Activated CD4-positive, alpha-beta memory T cell treated with anti-CD3 and anti-CD28 coated beads for 36 hours (primary cell): ENCODE measurements at regions of chr6 and their contacts with region 1.

Region 1: DNA sequence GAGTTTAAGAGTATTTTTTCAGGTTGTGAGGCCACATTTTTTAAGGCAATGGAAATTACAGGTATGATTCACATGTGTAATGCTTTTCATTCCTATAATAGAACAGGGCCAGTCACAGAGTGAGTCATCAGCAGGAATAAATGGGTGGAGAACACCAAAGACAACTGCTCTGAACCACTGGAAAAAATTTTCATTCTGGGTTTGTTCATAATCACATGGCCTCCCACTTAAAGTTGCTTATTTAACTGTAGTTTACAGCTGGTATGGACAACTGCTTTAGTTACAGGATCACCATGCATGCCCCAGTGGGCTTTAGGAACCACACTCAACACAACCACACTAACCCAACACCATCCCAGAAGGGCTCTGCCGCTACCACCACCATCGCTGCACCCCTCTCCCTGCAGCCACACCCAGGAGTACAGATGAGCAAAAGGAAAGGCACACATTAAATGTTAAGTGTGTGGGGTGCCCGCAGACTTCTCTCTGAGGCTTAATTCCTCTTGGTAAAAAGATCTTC is 107.0 kb upstream of the DST start:
- DNase-seq: no peak
- H3K4me3 Mint-ChIP-seq: no peak overlapping the region
- H3K27ac Mint-ChIP-seq: no peak overlapping the region
- H3K4me1 Mint-ChIP-seq: peaks cover 9% of the 10 kb centered on the region
- H3K27me3 Mint-ChIP-seq: no peaks in the 10 kb centered on the region

Region 2: DNA sequence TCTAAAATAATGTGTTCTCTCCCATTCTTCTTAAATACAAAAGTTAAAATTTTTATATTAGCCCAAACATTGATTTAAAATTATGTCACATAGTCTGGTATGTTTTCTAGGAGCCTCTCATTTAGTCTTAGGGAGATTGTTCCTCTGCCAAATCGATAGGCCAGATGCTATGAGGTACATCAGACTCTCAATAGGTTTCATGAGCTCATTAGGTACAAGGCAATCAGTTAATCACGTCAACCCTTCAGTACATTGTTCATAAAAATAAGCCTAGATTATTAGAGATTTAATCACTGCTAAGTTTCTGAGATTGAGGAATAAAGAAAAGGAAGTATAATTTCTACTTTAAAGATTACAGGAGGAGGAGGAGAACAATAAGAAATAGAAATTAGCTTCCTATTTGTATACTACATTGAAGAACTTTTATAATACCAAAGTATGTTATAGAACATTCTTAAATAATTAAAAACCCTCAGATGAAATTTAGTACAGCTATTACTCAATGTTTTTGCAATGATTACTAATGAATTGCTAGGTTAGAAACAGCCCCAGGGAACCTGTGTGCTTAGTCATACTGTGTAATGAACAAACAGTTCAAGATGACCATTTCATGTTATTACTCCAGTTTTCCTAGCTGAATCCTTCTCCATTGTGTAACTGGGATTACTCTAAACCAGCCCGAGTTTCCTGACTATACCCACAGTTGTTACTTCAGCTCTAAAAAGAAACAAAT is 991.4 kb before region 1 on chr6:
- CTCF ChIA-PET with region 1: no interaction called
- POLR2A ChIA-PET with region 1: no interaction called
- intact Hi-C with region 1: no loop called
- DNase-seq: no peak
- H3K4me3 Mint-ChIP-seq: no peak overlapping the region
- H3K27ac Mint-ChIP-seq: no peak overlapping the region
- H3K4me1 Mint-ChIP-seq: no peaks in the 10 kb centered on the region
- H3K27me3 Mint-ChIP-seq: no peaks in the 10 kb centered on the region

Region 3: GRCh38 chr6:56843573-56844349 is 94.1 kb after region 1 on chr6:
- CTCF ChIA-PET with region 1: no interaction called
- POLR2A ChIA-PET with region 1: no interaction called
- intact Hi-C with region 1: loop called (anchors 5 kb)
- DNase-seq: peak; percentile 76
- H3K4me3 Mint-ChIP-seq: peak overlapping the region; percentile 70
- H3K27ac Mint-ChIP-seq: no peak overlapping the region
- H3K4me1 Mint-ChIP-seq: peaks cover 7% of the 10 kb centered on the region
- H3K27me3 Mint-ChIP-seq: peaks cover 37% of the 10 kb centered on the region

Region 4: DNA sequence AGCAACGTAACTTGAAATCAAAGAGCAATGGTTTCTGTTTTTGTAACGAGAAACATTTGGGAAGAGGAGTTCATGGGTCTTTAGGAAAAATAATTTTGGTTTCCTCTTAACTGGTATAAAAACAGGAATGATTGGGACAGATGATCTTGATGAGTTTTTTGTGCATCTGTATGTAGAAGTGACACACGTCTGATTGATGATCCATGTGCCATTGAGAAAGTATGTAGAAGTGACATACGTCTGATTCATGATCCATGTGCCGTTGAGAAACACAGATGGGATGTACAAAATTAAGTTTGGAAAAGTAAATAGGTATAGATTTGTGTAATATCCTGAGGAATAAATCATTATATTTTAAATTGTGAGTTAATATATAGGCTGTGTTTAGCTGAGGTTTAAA is 298.9 kb after region 1 on chr6:
- CTCF ChIA-PET with region 1: no interaction called
- POLR2A ChIA-PET with region 1: no interaction called
- intact Hi-C with region 1: no loop called
- DNase-seq: no peak
- H3K4me3 Mint-ChIP-seq: peak overlapping the region; percentile 64
- H3K27ac Mint-ChIP-seq: no peak overlapping the region
- H3K4me1 Mint-ChIP-seq: peaks cover 19% of the 10 kb centered on the region
- H3K27me3 Mint-ChIP-seq: peaks cover 10% of the 10 kb centered on the region